Heart left ventricle (tissue), 16 donors: ENCODE measurements at regions of chr16 and their contacts with region 1.

Region 1: GRCh38 chr16:22977294-22977697 is 163.3 kb downstream of the HS3ST2 start:
- DNase-seq: no peak
- ATAC-seq: no peak
- H3K4me3 ChIP-seq: no peak overlapping the region
- H3K27ac ChIP-seq: no peak overlapping the region
- H3K4me1 ChIP-seq: no peaks in the 10 kb centered on the region
- H3K27me3 ChIP-seq: peaks cover 0 to 21% (median 0%) of the 10 kb centered on the region in 9 donors
- CTCF ChIP-seq: peak in 10 of 12 donors; percentile 20 to 61 (median 38)
- POLR2A ChIP-seq: no peak

Region 2: GRCh38 chr16:22924492-22924891 is 52.8 kb before region 1 on chr16:
- intact Hi-C with region 1: loop called in 1 of 10 experiments (anchors 5 kb)
- DNase-seq: no peak
- ATAC-seq: no peak
- H3K4me3 ChIP-seq: no peak overlapping the region
- H3K27ac ChIP-seq: no peak overlapping the region
- H3K4me1 ChIP-seq: peaks cover 0 to 3% (median 0%) of the 10 kb centered on the region in 12 donors
- H3K27me3 ChIP-seq: peaks cover 0 to 7% (median 0%) of the 10 kb centered on the region in 9 donors
- CTCF ChIP-seq: no peak
- POLR2A ChIP-seq: no peak

Region 3: GRCh38 chr16:22938647-22939046 is 38.6 kb before region 1 on chr16:
- intact Hi-C with region 1: no loop called
- DNase-seq: no peak
- ATAC-seq: no peak
- H3K4me3 ChIP-seq: no peak overlapping the region
- H3K27ac ChIP-seq: no peak overlapping the region
- H3K4me1 ChIP-seq: peaks cover 0 to 10% (median 1%) of the 10 kb centered on the region in 12 donors
- H3K27me3 ChIP-seq: peaks cover 0 to 17% (median under 1%) of the 10 kb centered on the region in 9 donors
- CTCF ChIP-seq: no peak
- POLR2A ChIP-seq: no peak

Region 4: DNA sequence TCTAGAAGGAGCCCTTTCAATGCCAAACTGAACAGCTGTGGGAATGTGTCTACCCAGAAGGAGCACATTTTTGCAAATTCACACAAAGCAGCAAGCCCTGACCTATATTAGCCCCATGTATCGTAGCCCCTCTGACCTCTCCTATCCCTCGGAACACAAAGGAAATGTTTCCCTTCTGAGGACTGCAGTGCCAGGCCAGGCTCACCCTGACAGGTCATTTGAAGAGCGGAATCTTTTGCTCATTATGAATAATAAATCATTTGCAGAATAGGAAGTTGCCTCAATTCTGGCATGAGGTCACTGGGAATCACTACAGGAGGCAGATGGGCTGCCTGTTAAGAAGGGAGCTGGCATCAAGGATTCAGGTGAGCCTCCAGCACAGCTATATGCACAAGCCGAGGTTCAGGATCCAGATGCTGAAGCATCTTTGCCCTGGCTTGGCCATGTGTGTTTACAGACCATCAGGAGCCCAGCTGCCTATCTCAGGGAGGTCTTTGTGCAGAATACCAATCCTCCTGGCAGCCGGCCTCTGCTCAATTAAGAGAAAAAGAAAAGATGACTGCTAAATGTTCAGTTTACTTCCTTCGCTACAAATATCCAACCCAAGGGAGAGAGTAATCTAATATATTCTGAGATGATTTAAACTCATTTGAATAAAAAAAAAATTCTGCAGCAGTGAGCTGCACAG is 52.6 kb after region 1 on chr16:
- intact Hi-C with region 1: loop called in 1 of 10 experiments (anchors 10 kb)
- DNase-seq: no peak
- ATAC-seq: no peak
- H3K4me3 ChIP-seq: no peak overlapping the region
- H3K27ac ChIP-seq: no peak overlapping the region
- H3K4me1 ChIP-seq: no peaks in the 10 kb centered on the region
- H3K27me3 ChIP-seq: peaks cover 0 to 18% (median 0%) of the 10 kb centered on the region in 9 donors
- CTCF ChIP-seq: no peak
- POLR2A ChIP-seq: no peak